ENCODE measurements at regions of chr17 and their contacts with region 1.

Region 1: GRCh38 chr17:50707289-50708049 is at the start of gene ANKRD40:
- DNase-seq: peak; percentile 96
- H3K4me3 ChIP-seq: peak within 1 kb of the TSS; percentile 65 to 80
- H3K27ac ChIP-seq: peak within 1 kb of the TSS; percentile 95 to 98
- H3K4me1 ChIP-seq: peaks cover 10 to 15% of the 10 kb centered on the region in 2 experiments
- H3K27me3 ChIP-seq: no peaks in the 10 kb centered on the region
- CTCF ChIP-seq: no peak
- EP300 ChIP-seq: peak in 1 of 2 experiments; percentile 53; a peak in 1 of 4 replicates
- RAD21 ChIP-seq: no peak
- polyA plus RNA-seq, gene ANKRD40: 33.6 and 46.3 TPM in 2 replicates

Region 2: DNA sequence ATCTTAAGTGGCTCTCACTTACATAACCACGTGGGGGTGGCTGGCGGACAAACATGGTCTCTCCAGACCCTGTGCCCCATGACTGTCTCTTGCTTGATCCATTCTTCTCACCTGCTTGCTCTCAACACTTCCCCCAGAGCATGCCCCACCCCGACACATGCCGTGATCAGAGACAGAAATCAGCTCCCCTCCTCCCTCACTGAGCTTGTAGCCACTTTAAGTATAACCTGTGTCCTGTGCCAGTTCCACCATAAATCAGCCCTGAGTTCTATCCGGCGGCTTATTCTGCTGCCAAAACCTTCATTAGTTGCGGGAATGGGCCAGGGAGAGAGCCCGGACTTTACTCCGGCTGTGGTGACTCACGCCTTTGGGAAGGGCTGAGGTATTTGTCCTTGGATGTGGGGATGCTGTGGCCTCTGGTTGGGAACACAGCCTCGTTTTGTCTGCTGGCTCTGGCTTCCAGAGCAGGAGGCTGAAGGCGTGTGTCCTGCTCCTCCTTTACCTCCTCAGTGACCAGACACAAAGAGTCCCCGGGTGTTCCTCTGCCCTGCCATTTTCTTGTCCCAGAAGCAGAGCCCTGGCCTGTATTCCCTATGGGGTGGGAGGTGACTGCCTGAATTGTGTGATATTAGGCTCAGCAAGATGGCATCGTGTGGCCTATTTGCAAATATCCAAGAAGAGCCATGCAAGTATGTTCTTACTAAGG is 20.8 kb before region 1 on chr17:
- CTCF ChIA-PET with region 1: interaction called, 108 read pairs
- POLR2A ChIA-PET with region 1: interaction called, 4 read pairs
- DNase-seq: no peak
- H3K4me3 ChIP-seq: no peak overlapping the region
- H3K27ac ChIP-seq: peak overlapping the region; percentile 77 to 85
- H3K4me1 ChIP-seq: peaks cover 26 to 40% of the 10 kb centered on the region in 2 experiments; a peak in 3 of 4 replicates
- H3K27me3 ChIP-seq: no peaks in the 10 kb centered on the region
- CTCF ChIP-seq: no peak
- EP300 ChIP-seq: peak in 1 of 2 experiments; percentile 93; a peak in 1 of 4 replicates
- RAD21 ChIP-seq: no peak

Region 3: GRCh38 chr17:50719144-50719923 is 11.9 kb after region 1 on chr17 and contains the start of gene LUC7L3:
- CTCF ChIA-PET with region 1: interaction called, 9 read pairs
- POLR2A ChIA-PET with region 1: interaction called, 27 read pairs
- DNase-seq: peak; percentile 100
- H3K4me3 ChIP-seq: peak within 1 kb of the TSS; percentile 68 to 86
- H3K27ac ChIP-seq: peak within 1 kb of the TSS; percentile 92 to 98
- H3K4me1 ChIP-seq: peaks cover 4 to 6% of the 10 kb centered on the region in 2 experiments; a peak in 2 of 4 replicates
- H3K27me3 ChIP-seq: no peaks in the 10 kb centered on the region
- CTCF ChIP-seq: no peak
- EP300 ChIP-seq: peak in 1 of 2 experiments; percentile 15; a peak in 2 of 4 replicates
- RAD21 ChIP-seq: no peak; the same call in 1 of the 2 replicates
- polyA plus RNA-seq, gene LUC7L3: 154 and 164 TPM in 2 replicates